GM18951 (cell line): ENCODE measurements at regions of chr15 and their contacts with region 1.

Region 1: GRCh38 chr15:51649659-51650521 is 27.3 kb upstream of the DMXL2 start:
- POLR2A ChIP-seq: no peak

Region 2: DNA sequence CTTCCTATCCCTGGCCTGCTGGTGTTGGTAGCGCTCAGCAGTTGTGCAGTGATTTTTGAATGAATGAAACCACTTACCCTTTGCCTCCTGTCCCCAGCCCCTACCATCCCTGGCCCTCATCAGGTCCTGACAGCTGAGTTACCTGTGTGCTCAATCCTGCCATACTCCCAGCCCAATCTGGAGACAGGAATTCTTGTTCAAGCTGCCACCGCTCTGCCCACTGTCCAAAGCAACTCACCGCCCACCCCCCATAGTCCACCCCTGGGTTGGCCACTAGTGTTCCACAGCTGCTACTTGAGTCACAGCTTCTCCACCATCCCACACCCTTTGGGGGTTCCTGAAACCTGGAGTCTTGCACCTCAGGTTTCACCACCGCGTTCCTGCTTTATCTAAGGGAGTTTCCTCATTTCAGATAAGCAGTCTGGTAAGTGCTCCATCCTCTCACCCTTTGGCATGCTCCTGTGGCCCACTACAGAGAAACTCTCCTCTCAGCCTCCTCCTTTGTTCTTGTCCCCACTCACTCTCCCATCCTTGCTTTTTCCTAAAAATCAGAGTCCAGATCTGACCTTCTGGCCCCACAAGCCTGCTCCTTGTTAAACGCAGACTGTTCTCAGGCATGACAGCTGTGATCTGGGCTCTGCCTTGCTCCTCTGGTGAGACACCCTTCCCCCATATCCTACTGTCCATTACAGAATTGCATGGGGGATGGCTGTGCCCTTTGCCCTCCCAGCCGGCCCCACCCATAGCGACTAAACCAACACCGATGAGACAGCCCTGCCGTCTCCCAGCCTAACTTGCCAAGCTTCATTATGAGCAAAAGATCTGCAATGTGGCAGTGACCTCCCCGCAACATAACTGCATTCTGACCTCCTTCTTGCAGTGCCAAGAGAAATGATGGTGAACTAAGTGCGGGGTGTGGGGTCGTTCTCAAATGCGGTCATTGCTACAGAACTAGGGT is 361.5 kb before region 1 on chr15:
- in situ Hi-C with region 1: no loop called
- POLR2A ChIP-seq: no peak

Region 3: GRCh38 chr15:51782357-51782896 is 132.5 kb after region 1 on chr15:
- in situ Hi-C with region 1: loop called (anchors 5 kb)
- POLR2A ChIP-seq: no peak